ENCODE measurements at regions of chr14 and their contacts with region 1.

Region 1: DNA sequence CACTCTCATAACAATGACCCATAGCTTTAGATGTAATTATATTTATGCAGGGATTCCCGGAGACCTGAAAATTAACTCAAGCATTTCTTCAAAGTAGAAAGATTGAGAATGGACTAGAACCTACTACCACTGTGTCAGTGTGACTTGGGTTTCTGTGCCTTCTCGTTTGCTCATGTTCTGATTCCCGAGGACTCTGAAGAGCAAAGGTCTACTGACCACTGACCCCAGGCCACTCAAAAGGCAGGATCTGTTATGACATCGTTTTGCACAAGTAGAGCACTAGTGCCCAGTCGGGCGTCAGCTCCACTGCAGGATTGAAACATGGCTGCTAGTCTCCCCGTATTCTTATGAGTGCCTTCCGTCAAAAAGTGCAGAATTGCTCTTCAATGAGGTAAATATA is 53.8 kb upstream of the DHRS4 start:
- DNase-seq: no peak
- ATAC-seq: no peak
- H3K4me3 Mint-ChIP-seq: no peak overlapping the region
- H3K27ac Mint-ChIP-seq: no peak overlapping the region
- H3K4me1 Mint-ChIP-seq: no peaks in the 10 kb centered on the region
- H3K27me3 Mint-ChIP-seq: peaks cover 15% of the 10 kb centered on the region
- CTCF ChIP-seq: no peak

Region 2: DNA sequence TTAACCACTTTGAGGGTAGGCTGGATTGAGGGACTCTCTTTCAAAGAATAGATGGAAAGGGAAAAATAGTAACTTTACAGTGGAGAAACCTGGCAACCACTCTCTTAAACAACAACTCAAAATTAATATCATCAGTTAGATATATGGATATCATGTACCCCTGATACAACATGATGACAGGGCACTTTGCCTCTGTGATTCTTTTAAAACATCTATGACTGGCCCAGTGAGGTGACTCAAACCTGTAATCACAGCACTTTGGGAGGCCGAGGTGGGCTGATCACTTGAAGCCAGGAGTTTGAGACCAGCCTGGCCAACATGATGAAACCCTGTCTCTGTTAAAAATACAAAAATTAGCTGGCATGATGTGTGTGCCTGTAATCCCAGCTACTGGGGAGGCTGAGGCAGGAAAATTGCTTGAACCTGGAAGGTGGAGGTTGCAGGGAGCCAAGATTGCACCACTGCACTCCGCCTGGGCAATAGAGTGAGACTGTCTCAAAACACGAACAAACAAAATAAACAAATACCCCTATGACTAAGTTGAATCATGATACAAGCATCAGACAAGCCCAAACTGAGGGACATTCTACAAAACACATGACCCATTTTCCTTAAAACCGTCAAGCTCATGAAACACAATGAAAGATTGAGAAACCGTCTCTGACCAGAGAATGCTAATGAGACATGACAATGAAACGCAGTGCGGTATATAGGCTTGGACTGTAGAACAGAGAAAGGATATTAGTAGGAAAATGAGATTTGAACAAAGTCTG is 690.0 kb before region 1 on chr14:
- CTCF ChIA-PET with region 1: no interaction called
- POLR2A ChIA-PET with region 1: no interaction called
- intact Hi-C with region 1: no loop called
- DNase-seq: no peak
- ATAC-seq: no peak
- H3K4me3 Mint-ChIP-seq: no peak overlapping the region
- H3K27ac Mint-ChIP-seq: no peak overlapping the region
- H3K4me1 Mint-ChIP-seq: no peaks in the 10 kb centered on the region
- H3K27me3 Mint-ChIP-seq: peaks cover 7% of the 10 kb centered on the region
- CTCF ChIP-seq: no peak

Region 3: GRCh38 chr14:23883684-23884540 is 15.9 kb before region 1 on chr14:
- CTCF ChIA-PET with region 1: interaction called, 10 read pairs
- POLR2A ChIA-PET with region 1: interaction called, 4 read pairs
- intact Hi-C with region 1: no loop called
- DNase-seq: no peak
- ATAC-seq: no peak
- H3K4me3 Mint-ChIP-seq: no peak overlapping the region
- H3K27ac Mint-ChIP-seq: no peak overlapping the region
- H3K4me1 Mint-ChIP-seq: no peaks in the 10 kb centered on the region
- H3K27me3 Mint-ChIP-seq: peaks cover 14% of the 10 kb centered on the region
- CTCF ChIP-seq: no peak

Region 4: GRCh38 chr14:24456980-24457379 is 557.2 kb after region 1 on chr14:
- CTCF ChIA-PET with region 1: no interaction called
- POLR2A ChIA-PET with region 1: no interaction called
- intact Hi-C with region 1: no loop called
- DNase-seq: no peak
- ATAC-seq: no peak
- H3K4me3 Mint-ChIP-seq: no peak overlapping the region
- H3K27ac Mint-ChIP-seq: no peak overlapping the region
- H3K4me1 Mint-ChIP-seq: no peaks in the 10 kb centered on the region
- H3K27me3 Mint-ChIP-seq: peaks cover 2% of the 10 kb centered on the region
- CTCF ChIP-seq: no peak

Measured in activated CD8-positive, alpha-beta T cell treated with anti-CD3 and anti-CD28 coated beads for 36 hours (primary cell).